ENCODE measurements at regions of chr17 and their contacts with region 1.

Region 1: DNA sequence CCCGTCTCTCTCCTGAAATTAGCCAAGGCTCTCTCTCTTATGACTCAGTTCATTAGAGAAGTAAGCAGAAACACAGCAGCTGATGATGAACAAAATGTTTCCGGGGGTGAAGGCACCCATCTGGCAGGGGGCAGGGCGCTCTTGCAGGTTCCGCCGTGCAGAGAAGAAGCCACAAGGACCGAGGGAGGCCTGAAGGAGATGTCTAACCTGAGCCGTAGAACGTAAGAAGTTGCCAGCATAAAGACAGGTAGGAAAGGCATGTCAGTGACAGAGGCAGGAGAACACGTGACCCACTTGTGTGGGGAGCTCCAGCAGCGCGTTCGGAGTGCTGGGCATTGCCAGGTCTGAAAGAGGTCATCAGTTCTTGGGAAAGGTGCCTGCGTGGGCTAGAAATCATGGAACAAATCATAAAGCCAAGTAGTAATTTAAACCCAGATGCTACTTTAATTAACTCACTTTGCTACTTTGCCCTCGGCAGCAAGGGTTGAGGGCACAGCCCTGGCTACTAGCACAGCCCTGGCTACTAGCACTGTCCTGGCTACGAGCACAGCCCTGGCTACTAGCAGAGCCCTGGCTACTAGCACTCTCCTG is 198.6 kb downstream of the RPTOR start:
- DNase-seq: no peak
- H3K4me3 ChIP-seq: no peak overlapping the region
- H3K27ac ChIP-seq: no peak overlapping the region
- H3K4me1 ChIP-seq: no peaks in the 10 kb centered on the region
- H3K27me3 ChIP-seq: no peaks in the 10 kb centered on the region
- CTCF ChIP-seq: no peak
- POLR2A ChIP-seq: no peak

Region 2: GRCh38 chr17:80791758-80792284 is 48.5 kb after region 1 on chr17:
- intact Hi-C with region 1: no loop called
- DNase-seq: no peak
- H3K4me3 ChIP-seq: no peak overlapping the region
- H3K27ac ChIP-seq: peak overlapping the region; percentile 30 to 41
- H3K4me1 ChIP-seq: no peaks in the 10 kb centered on the region
- H3K27me3 ChIP-seq: no peaks in the 10 kb centered on the region
- CTCF ChIP-seq: no peak
- POLR2A ChIP-seq: no peak

Region 3: DNA sequence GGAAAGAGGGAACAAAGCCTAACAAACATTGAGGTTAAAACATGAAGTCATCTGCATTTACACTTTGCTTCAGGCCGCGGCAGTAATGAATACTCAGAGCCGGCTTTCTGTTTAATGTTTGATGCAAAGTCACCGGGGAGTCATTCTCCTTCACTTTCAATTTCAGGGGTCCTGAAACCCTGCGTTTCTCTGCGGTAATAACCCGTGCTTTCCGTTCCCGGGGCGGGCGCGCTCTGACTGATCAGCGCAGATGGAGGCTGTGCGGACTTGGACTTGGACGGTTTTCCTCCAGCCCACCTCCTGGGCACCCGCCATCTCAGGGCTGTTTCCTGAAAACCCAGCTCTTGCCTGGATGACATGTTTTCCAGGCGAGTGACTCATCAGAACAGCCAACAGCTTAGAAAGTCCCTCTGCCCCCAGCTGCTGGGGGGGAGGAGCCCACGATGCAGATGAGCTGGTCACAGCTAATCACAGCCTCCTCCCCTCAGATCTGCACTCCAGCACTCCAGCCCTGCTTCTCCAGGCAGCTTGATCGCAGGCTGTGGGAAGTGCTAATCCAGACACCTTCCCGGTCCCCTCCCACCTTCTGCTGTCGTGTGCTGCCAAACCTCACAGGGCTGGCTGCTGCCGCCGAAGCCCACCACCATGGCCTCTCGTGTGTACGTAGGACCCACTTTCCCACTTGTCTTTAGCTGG is 89.8 kb after region 1 on chr17:
- intact Hi-C with region 1: loop called (anchors 10 kb)
- DNase-seq: peak; percentile 79
- H3K4me3 ChIP-seq: peak overlapping the region; percentile 28 to 40
- H3K27ac ChIP-seq: peak overlapping the region; percentile 80 to 84
- H3K4me1 ChIP-seq: no peaks in the 10 kb centered on the region
- H3K27me3 ChIP-seq: no peaks in the 10 kb centered on the region
- CTCF ChIP-seq: no peak
- POLR2A ChIP-seq: peak; percentile 62

Measured in prostate gland (tissue), 2 donors.